ENCODE measurements at regions of chr16 and their contacts with region 1.

Region 1: DNA sequence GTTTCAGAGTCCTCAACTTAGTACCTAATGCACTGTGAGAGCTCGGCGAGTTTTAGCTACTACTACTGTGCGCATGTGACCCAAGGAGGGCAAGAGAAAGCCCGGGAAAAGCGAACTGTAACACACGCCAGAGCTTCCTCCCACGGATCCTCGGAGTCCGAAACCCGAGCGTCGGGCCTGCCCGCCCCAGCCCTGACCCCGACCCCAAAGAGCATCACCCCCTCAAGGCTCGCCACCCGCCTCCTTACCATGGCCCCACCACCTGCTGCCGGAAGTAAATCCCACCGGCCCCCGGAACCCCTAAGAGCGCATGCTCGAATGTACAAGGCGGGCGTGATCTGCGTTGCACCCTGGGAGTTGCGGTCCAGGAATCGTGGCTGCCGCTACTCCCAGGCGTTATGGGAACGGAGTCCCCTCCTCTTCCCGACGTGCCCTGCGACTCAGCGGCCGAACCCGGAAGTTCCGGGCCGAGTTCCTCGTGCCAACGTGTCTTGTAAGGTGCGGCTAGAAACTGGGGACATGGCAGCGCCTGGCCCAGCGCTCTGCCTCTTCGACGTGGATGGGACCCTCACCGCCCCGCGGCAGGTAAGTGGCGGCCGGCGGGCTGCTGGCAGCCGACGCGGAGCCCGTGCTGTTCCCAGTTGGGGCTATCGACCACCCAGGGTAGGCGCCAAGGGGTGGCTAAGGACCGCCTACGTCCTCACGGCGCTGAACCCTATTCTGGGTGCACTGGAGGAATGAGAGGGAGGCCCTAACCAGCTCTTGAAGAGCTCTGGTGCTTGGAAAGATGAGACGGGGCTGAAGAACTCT is at the starts of genes PMM2 and TMEM186:
- DNase-seq: peak; percentile 95 to 96
- H3K4me3 ChIP-seq: peak within 1 kb of the TSS; percentile 96
- H3K27ac ChIP-seq: peak within 1 kb of the TSS; percentile 75
- H3K4me1 ChIP-seq: peaks cover 22% of the 10 kb centered on the region
- H3K27me3 ChIP-seq: no peaks in the 10 kb centered on the region
- CTCF ChIP-seq: no peak
- total RNA-seq, gene PMM2: 40.0 and 54.4 TPM in 2 replicates
- total RNA-seq, gene TMEM186: 20.5 and 27.0 TPM in 2 replicates

Region 2: DNA sequence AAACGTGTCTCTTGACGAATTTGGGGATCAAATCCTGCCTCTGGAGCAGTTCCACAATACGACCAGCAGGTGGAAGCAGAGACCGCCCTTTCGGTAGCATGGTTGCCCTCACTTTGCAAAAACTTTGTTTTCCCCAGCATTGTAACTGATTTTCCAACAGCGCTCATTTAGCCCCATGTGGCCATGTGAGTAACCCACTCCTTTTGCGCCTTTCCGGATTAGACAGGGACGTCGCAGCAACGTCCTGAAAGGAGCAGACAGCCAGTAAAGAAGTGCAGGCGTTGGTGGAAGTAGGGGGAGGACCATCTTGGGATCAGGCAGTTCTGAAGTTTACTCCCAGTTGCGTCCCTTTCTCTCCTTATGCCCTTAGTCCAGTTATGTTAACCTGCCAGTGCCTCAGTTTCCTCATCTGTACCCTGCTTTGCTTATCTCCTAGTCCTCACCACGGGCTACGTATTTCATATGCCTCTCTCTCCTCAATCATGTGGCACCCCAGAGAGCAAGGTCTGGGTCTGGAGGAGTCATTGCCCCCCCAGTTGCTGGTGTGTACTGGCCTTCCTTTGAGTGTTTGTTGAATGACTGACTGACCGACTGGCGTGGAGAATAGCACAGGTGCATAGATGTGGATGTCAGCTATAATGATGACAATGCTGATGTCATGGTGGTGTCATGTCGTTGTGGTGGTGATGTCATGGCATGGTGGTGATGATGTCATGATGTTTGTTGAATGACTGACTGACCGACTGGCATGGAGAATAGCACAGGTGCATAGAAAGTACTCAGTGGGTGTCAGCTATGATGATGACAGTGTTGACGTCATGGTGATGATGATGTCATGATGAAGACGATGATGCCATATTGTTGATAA is 229.6 kb before region 1 on chr16:
- CTCF ChIA-PET with region 1: no interaction called
- POLR2A ChIA-PET with region 1: no interaction called
- intact Hi-C with region 1: loop called (anchors 1 kb)
- DNase-seq: peak; percentile 77
- H3K4me3 ChIP-seq: no peak overlapping the region
- H3K27ac ChIP-seq: no peak overlapping the region
- H3K4me1 ChIP-seq: no peaks in the 10 kb centered on the region
- H3K27me3 ChIP-seq: peaks cover 9% of the 10 kb centered on the region; the same call in 1 of the 2 replicates
- CTCF ChIP-seq: peak; percentile 96

Region 3: DNA sequence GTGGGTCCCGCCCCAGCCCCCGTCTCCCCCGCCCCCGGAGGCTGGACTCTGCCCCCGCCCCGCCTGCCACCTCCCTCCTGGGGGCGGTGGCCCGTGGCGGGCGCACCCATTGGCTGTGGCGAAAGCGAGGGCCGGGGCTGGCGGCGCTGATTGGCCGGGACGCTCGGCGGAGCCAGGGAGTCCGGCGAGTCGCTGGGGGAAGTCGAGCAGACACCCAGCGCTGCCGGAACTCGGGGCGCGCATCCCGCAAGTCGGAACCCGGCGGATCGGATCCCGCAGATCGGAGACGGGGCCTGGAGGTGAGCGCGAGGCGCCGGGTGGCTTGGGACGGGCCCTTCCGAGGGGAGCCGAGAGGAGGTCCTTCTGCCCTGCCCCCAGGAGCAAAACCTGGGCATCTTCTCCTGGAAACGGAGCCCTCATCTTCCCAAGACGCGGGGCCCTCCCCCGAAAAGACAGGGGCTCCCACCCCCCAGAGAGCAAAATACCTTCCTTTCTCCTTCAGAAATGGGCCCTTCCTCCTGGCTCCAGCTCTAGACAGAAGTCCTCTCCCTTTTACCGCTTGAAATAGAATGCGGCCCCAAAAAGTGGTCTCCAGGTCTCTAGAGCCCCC is 123.1 kb before region 1 on chr16 and contains the start of gene ABAT:
- CTCF ChIA-PET with region 1: no interaction called
- POLR2A ChIA-PET with region 1: no interaction called
- intact Hi-C with region 1: loop called (anchors 2 kb)
- DNase-seq: peak; percentile 74 to 94
- H3K4me3 ChIP-seq: peak within 1 kb of the TSS; percentile 68
- H3K27ac ChIP-seq: no peak within 1 kb of the TSS
- H3K4me1 ChIP-seq: peaks cover 47% of the 10 kb centered on the region
- H3K27me3 ChIP-seq: no peaks in the 10 kb centered on the region
- CTCF ChIP-seq: no peak
- total RNA-seq, gene ABAT: 8.6 and 12.9 TPM in 2 replicates

Region 4: GRCh38 chr16:8868416-8869211 is 71.0 kb after region 1 on chr16 and contains the start of gene CARHSP1:
- CTCF ChIA-PET with region 1: no interaction called
- POLR2A ChIA-PET with region 1: interaction called, 20 read pairs
- intact Hi-C with region 1: loop called (anchors 2 kb)
- DNase-seq: peak; percentile 83 to 90
- H3K4me3 ChIP-seq: peak within 1 kb of the TSS; percentile 88
- H3K27ac ChIP-seq: peak within 1 kb of the TSS; percentile 55
- H3K4me1 ChIP-seq: peaks cover 41% of the 10 kb centered on the region
- H3K27me3 ChIP-seq: no peaks in the 10 kb centered on the region
- CTCF ChIP-seq: no peak
- total RNA-seq, gene CARHSP1: 179 and 186 TPM in 2 replicates

Region 5: DNA sequence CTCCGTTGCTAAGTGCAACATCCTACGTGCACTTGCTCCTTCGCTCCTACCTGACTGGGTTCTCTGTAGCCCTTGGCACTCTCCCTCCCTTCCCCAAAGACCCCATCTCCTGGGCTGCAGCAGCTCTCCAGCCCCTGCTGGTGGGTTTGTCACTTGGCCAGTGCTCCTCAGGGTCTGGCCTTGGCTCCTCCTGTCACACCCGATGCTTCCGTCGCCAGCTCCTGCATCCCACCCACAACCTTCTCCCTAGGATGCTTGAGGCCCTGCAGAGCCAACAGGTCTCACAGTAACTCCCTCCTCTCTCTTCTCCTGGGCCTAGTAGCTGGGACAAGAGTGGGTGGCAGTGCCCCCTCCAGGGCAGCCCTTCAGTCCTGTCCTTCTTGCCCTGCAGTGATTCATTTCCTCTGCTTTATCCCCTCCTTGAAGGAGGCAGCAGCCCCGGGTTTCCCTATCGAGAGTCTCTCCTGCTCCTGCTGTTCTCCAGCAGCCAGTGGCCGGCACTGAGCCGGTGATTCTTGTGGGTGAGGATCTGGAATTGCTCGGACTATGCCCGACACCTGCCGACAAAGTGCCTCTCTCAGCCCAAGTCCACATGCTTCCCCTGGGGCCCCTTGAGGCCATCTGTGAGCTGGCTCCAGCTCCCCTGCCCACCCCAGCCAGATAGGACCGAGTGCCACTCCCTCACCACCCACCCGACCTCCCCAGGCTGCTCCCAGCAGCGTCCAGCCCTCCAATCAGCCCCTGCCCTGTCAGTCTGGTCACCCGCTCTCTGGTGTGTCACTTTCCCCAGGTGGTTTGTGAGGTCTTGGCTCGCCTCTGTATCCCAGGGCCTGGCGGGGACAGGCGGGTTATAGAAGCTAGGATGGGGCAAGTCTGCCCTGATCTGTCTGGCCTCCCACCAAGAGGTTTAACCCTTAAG is 88.4 kb after region 1 on chr16:
- CTCF ChIA-PET with region 1: no interaction called
- POLR2A ChIA-PET with region 1: interaction called, 12 read pairs
- intact Hi-C with region 1: no loop called
- DNase-seq: peak in 1 of 2 experiments; percentile 56
- H3K4me3 ChIP-seq: no peak overlapping the region
- H3K27ac ChIP-seq: peak overlapping the region; percentile 26; the same call in 1 of the 2 replicates
- H3K4me1 ChIP-seq: peaks cover 22% of the 10 kb centered on the region
- H3K27me3 ChIP-seq: no peaks in the 10 kb centered on the region
- CTCF ChIP-seq: no peak

Region 6: GRCh38 chr16:8963825-8964441 is 166.4 kb after region 1 on chr16 and contains the start of gene USP7:
- CTCF ChIA-PET with region 1: no interaction called
- POLR2A ChIA-PET with region 1: no interaction called
- intact Hi-C with region 1: loop called (anchors 5 kb)
- DNase-seq: peak; percentile 48 to 92
- H3K4me3 ChIP-seq: peak within 1 kb of the TSS; percentile 76
- H3K27ac ChIP-seq: no peak within 1 kb of the TSS; the same call in 1 of the 2 replicates
- H3K4me1 ChIP-seq: peaks cover 46% of the 10 kb centered on the region
- H3K27me3 ChIP-seq: no peaks in the 10 kb centered on the region
- CTCF ChIP-seq: no peak
- total RNA-seq, gene USP7: 113 and 167 TPM in 2 replicates

Measured in PC-9 (cell line).